ENCODE measurements at regions of chr11 and their contacts with region 1.

Region 1: DNA sequence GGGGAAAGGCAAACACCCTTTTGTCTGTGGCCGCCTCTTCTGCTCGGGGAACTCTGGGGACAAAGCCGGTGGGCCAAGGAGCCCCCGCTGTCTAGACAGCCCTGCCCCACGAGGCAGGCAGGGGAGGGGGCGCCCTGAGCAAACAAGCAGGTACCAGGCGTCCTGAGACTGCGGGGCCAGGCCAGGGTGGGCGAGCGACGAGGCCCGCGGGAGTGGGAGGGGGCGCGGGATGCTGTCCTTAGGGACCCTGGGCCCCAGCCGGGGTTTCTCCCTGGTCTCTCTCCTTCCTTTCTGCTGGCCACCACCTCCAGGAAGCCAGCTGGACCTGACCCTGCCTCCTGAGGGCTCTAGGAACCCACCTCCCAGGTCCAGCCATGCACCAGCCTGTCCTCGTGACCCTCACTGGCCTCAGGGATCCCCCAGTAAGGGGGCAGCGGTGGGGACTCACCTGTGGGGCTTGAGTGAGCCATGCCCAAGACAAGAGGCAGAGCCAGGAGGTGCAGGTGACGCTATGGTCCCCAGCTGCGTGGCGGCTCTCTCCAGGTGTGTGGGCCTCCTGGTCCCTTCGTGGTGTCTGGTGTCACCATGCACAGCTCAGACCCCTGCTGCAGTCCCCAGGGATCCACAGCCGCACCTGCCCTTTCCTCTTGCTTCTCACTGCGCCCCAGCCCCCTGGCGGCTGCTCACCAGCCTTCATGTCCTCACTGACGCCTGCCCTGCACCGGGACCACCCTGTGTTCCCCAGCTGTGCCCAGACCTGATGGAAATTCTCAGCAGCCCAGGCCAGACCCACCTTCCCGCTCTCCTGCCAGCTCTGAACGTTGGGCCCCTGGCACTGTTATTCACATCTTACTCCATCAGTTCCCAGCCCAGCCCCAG is 26.5 kb upstream of the MUC5AC start:
- DNase-seq: no peak
- H3K4me3 Mint-ChIP-seq: no peak overlapping the region
- H3K27ac Mint-ChIP-seq: no peak overlapping the region
- H3K4me1 Mint-ChIP-seq: no peaks in the 10 kb centered on the region
- H3K27me3 Mint-ChIP-seq: no peaks in the 10 kb centered on the region
- CTCF ChIP-seq: no peak

Region 2: DNA sequence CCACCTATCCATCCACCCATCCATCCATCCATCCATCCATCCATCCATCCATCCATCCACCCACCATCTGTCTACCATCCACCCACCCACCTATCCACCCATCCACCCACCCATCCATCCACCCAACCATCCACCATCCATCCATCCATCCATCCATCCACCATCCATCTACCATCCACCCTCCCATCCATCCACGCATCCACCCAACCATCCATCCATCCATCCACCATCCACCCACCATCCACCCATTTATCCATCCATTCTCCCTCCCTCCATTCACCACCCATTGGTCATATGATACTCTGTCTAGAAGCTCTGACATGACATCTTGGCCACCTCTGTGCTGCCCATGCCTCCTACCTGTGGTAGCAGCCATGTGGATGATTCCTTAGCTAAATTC is 24.9 kb before region 1 on chr11:
- CTCF ChIA-PET with region 1: interaction called, 10 read pairs
- intact Hi-C with region 1: no loop called
- DNase-seq: no peak
- H3K4me3 Mint-ChIP-seq: no peak overlapping the region
- H3K27ac Mint-ChIP-seq: no peak overlapping the region
- H3K4me1 Mint-ChIP-seq: no peaks in the 10 kb centered on the region
- H3K27me3 Mint-ChIP-seq: peaks cover 27% of the 10 kb centered on the region
- CTCF ChIP-seq: no peak

Measured in Calu3 (cell line).